AG04449 (cell line): ENCODE measurements at regions of chr6 and their contacts with region 1.

Region 1: GRCh38 chr6:44237813-44238433 is 9.0 kb upstream of the HSP90AB1 start:
- DNase-seq: no peak
- H3K4me3 ChIP-seq: peak overlapping the region; percentile 67
- CTCF ChIP-seq: peak; percentile 99

Region 2: GRCh38 chr6:44096612-44097011 is 141.3 kb before region 1 on chr6:
- CTCF ChIA-PET with region 1: interaction called, 83 read pairs
- POLR2A ChIA-PET with region 1: no interaction called
- DNase-seq: no peak
- H3K4me3 ChIP-seq: no peak overlapping the region
- CTCF ChIP-seq: peak; percentile 86

Region 3: DNA sequence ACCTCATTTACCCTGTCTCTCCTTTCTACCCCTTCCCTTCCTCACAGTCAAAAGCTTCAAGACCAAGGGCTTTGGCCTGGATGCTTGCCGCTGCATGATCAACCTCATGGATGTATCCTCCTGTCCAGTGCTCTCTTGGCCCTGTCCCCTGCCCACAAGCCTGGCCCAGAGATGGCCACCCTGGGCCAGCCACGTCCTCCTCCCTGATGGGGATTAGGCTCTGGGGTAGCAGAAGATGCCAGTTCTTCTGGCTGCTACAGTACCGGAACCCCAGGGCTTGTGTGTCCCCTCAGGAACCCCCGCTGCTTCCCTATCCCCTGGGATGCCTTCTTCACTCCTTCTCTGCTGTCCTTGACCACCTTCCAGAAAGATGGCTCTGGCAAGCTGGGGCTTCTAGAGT is 57.0 kb before region 1 on chr6:
- CTCF ChIA-PET with region 1: interaction called, 10 read pairs
- POLR2A ChIA-PET with region 1: no interaction called
- DNase-seq: no peak
- H3K4me3 ChIP-seq: no peak overlapping the region
- CTCF ChIP-seq: no peak

Region 4: GRCh38 chr6:44221291-44221960 is 16.5 kb before region 1 on chr6:
- CTCF ChIA-PET with region 1: interaction called, 175 read pairs
- POLR2A ChIA-PET with region 1: interaction called, 6 read pairs
- DNase-seq: no peak
- H3K4me3 ChIP-seq: no peak overlapping the region
- CTCF ChIP-seq: peak; percentile 90

Region 5: GRCh38 chr6:44265007-44265721 is 27.2 kb after region 1 on chr6 and contains the start of gene NFKBIE:
- CTCF ChIA-PET with region 1: interaction called, 10 read pairs
- POLR2A ChIA-PET with region 1: no interaction called
- DNase-seq: peak; percentile 50
- H3K4me3 ChIP-seq: peak within 1 kb of the TSS; percentile 80
- CTCF ChIP-seq: peak; percentile 26